B cell (primary cell): ENCODE measurements at regions of chr6 and their contacts with region 1.

Region 1: DNA sequence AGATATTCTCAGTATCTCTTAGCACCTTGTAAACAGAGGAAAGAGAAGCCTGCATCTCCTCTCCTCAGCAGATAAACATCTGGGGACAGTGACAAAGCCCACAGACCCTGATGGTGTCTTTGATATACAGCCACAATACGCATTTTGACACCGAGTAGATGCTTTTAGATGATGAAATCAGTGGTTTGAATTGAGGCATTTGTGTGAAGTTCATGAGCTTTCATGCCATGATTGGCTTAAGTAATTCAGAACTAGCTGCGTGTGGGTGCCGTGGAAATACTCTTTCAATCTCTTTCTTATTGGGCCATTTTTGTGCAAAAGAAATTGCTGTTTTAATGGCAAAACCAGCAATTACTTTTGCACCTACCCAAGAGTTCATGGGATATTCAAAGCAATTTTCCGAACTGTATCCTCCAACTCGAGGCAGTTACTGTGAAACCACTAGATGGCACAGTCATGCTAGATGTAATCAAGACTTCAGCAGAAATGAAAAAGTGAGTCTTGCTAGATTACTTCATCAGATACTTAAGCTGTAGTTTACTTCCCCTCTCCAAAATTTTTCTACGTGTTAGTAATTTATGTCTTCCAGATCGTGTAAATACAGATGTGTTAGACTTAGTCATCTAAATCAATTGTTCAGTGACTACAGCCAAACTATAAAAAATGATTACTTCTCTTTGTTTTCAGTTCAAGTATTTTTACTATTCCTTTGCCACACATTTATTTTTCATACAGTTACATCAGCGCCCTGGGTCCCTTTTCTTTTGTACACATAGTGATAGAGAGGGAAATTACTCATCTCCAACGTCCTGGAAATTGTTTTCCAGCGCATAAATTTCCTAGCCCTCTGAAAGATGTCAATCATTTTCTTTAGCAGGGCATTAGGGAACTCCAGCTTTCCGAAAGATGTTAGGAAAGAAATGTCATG is 49.4 kb downstream of the IYD start:
- DNase-seq: peak; percentile 84
- ATAC-seq: peak; percentile 82
- H3K4me3 ChIP-seq: peak overlapping the region; percentile 45 to 75 (median 63)
- H3K4me3 Mint-ChIP-seq: peak overlapping the region; percentile 91
- H3K27ac ChIP-seq: peak overlapping the region in 1 of 2 donors; percentile 73
- H3K27ac Mint-ChIP-seq: peak overlapping the region; percentile 22
- H3K4me1 ChIP-seq: peaks cover 0 to 5% of the 10 kb centered on the region in 2 donors
- H3K4me1 Mint-ChIP-seq: peaks cover 14% of the 10 kb centered on the region
- H3K27me3 ChIP-seq: peaks cover 0 to 4% (median 2%) of the 10 kb centered on the region in 4 experiments
- H3K27me3 Mint-ChIP-seq: peaks cover 23% of the 10 kb centered on the region
- CTCF ChIP-seq: peak; percentile 79

Region 2: GRCh38 chr6:150606168-150606591 is 188.0 kb after region 1 on chr6:
- CTCF ChIA-PET with region 1: interaction called, 71 read pairs
- POLR2A ChIA-PET with region 1: no interaction called
- intact Hi-C with region 1: no loop called
- DNase-seq: no peak
- ATAC-seq: no peak
- H3K4me3 ChIP-seq: no peak overlapping the region
- H3K4me3 Mint-ChIP-seq: no peak overlapping the region
- H3K27ac ChIP-seq: no peak overlapping the region
- H3K27ac Mint-ChIP-seq: no peak overlapping the region
- H3K4me1 ChIP-seq: peaks cover 59 to 62% of the 10 kb centered on the region in 2 donors
- H3K4me1 Mint-ChIP-seq: peaks cover 80% of the 10 kb centered on the region
- H3K27me3 ChIP-seq: no peaks in the 10 kb centered on the region
- H3K27me3 Mint-ChIP-seq: no peaks in the 10 kb centered on the region
- CTCF ChIP-seq: no peak

Region 3: GRCh38 chr6:150641398-150642139 is 223.4 kb after region 1 on chr6:
- CTCF ChIA-PET with region 1: interaction called, 16 read pairs
- POLR2A ChIA-PET with region 1: no interaction called
- intact Hi-C with region 1: no loop called
- DNase-seq: peak; percentile 86
- ATAC-seq: peak; percentile 68
- H3K4me3 ChIP-seq: peak overlapping the region; percentile 11 to 58 (median 41)
- H3K4me3 Mint-ChIP-seq: peak overlapping the region; percentile 90
- H3K27ac ChIP-seq: peak overlapping the region; percentile 72 to 90
- H3K27ac Mint-ChIP-seq: peak overlapping the region; percentile 90
- H3K4me1 ChIP-seq: peaks cover 54 to 80% of the 10 kb centered on the region in 2 donors
- H3K4me1 Mint-ChIP-seq: peaks cover 86% of the 10 kb centered on the region
- H3K27me3 ChIP-seq: no peaks in the 10 kb centered on the region
- H3K27me3 Mint-ChIP-seq: no peaks in the 10 kb centered on the region
- CTCF ChIP-seq: no peak

Region 4: DNA sequence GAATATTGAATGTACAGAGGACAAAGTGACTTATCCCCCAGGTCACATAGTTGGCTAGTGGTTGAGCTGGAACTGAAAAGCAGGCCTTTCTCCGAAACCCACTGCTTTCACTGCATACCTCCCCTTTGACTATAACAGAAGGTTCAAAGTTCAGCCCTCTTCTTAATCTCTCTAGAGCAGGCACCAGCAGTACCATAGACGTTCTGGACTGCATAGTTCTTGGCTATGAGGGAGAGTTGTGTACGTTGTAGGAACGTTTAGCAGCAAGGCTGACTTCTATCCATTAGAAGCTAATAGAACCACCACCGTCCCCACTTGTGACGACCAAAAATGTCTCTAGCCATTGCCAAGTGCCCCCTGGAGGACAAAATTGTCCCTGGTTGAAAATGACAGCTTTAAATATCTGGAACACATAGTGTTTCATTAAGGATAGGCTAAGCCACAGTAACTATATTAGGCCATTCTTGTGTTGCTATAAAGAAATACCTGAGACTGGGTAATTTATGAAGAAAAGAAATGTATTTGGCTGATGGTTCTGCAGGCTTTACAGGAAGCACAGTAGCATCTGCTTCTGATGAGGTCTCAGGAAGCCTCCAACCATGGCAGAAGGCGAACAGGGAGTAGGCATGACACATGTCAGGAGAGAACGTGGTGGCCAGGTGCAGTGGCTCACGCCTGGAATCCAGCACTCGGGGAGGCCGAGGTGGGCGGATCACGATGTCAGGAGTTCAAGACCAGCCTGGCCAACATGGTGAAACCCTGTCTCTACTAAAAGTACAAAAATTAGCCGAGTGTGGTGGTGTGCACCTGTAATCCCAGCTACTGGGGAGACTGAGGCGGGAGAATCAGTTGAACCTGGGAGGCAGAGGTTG is 323.7 kb after region 1 on chr6:
- CTCF ChIA-PET with region 1: interaction called, 54 read pairs
- POLR2A ChIA-PET with region 1: no interaction called
- intact Hi-C with region 1: loop called (anchors 1 kb)
- DNase-seq: peak; percentile 77
- ATAC-seq: peak; percentile 33
- H3K4me3 ChIP-seq: no peak overlapping the region
- H3K4me3 Mint-ChIP-seq: no peak overlapping the region
- H3K27ac ChIP-seq: peak overlapping the region in 1 of 2 donors; percentile 31
- H3K27ac Mint-ChIP-seq: peak overlapping the region; percentile 27
- H3K4me1 ChIP-seq: peaks cover 13 to 17% of the 10 kb centered on the region in 2 donors
- H3K4me1 Mint-ChIP-seq: peaks cover 67% of the 10 kb centered on the region
- H3K27me3 ChIP-seq: no peaks in the 10 kb centered on the region
- H3K27me3 Mint-ChIP-seq: no peaks in the 10 kb centered on the region
- CTCF ChIP-seq: peak; percentile 82

Region 5: GRCh38 chr6:150800674-150801314 is 382.6 kb after region 1 on chr6:
- CTCF ChIA-PET with region 1: interaction called, 35 read pairs
- POLR2A ChIA-PET with region 1: no interaction called
- intact Hi-C with region 1: no loop called
- DNase-seq: no peak
- ATAC-seq: no peak
- H3K4me3 ChIP-seq: no peak overlapping the region
- H3K4me3 Mint-ChIP-seq: no peak overlapping the region
- H3K27ac ChIP-seq: no peak overlapping the region
- H3K27ac Mint-ChIP-seq: no peak overlapping the region
- H3K4me1 ChIP-seq: no peaks in the 10 kb centered on the region
- H3K4me1 Mint-ChIP-seq: no peaks in the 10 kb centered on the region
- H3K27me3 ChIP-seq: no peaks in the 10 kb centered on the region
- H3K27me3 Mint-ChIP-seq: no peaks in the 10 kb centered on the region
- CTCF ChIP-seq: no peak

Region 6: DNA sequence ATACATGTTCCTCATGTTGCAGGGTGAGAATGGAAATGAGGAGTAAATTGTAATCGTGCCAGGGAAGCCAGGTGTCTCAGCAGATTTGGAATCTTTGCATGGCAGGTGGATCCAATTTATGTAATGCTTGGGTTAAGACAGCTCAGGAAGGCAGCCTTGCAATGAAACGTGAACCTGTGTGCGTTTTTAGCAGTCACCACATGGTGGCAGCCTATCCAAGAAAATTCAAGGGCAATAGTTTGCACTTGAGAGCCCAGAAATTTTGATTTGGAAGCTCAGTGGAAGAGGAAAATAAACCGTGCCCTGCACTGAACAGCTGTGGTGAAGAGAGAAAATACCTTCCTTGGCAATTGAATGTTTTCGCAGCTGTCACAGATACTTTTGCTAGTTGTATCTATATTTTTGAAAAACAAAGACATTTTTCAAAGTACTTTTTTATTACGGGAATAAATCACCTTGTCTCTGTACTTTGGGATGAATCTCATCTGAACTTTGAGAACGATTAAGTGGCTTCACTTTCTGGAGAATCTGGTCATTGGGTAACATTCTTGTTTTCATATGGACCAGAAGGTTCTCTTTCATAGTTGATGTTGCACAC is 473.8 kb after region 1 on chr6:
- CTCF ChIA-PET with region 1: interaction called, 10 read pairs
- POLR2A ChIA-PET with region 1: no interaction called
- intact Hi-C with region 1: no loop called
- DNase-seq: peak; percentile 72
- ATAC-seq: peak; percentile 57
- H3K4me3 ChIP-seq: no peak overlapping the region
- H3K4me3 Mint-ChIP-seq: no peak overlapping the region
- H3K27ac ChIP-seq: no peak overlapping the region
- H3K27ac Mint-ChIP-seq: peak overlapping the region; percentile 8
- H3K4me1 ChIP-seq: peaks cover 14 to 20% of the 10 kb centered on the region in 2 donors
- H3K4me1 Mint-ChIP-seq: peaks cover 20% of the 10 kb centered on the region
- H3K27me3 ChIP-seq: no peaks in the 10 kb centered on the region
- H3K27me3 Mint-ChIP-seq: no peaks in the 10 kb centered on the region
- CTCF ChIP-seq: peak; percentile 91